Calu3 (cell line): ENCODE measurements at regions of chr6 and their contacts with region 1.

Region 1: DNA sequence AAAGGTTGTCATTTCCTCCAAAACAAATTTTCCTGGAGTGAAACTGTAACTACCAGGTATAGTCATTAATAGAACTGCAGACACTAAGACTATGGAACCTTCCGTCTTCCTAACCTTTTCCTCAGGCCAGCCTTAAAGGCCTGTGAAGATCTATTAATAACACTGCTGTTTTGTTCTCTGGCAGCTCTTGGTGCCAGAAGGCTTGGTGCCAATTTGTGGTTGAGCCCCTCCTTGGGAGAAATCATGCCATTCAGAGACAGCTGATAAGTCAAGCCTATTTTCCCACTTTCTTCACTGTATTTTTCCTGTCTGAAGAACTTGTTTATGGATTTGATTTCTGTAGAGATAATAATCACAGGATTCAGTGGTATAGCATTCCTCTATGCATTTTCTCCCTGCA is 64.8 kb downstream of the HCRTR2 start:
- DNase-seq: peak; percentile 50
- H3K4me3 Mint-ChIP-seq: no peak overlapping the region
- H3K27ac Mint-ChIP-seq: no peak overlapping the region
- H3K4me1 Mint-ChIP-seq: peaks cover 23% of the 10 kb centered on the region
- H3K27me3 Mint-ChIP-seq: no peaks in the 10 kb centered on the region
- CTCF ChIP-seq: no peak

Region 2: DNA sequence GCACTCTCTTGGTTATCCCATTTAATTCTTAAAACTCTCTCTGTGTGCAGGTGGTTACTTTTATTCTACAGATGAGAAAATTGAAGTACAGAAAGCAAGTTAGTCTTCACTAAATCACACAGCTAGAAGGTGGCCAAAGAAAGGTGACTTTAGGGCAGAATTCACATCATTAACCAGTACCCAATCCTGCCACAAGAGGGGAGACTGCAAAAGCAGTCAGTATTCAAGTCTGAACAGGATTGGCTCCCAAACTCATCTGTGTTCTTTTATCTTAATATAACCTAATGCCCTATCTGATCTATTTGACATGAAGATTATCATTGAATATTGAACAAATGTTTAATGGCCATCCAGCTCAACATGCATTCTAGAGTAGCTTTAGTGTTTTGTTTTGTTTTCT is 617.8 kb before region 1 on chr6:
- CTCF ChIA-PET with region 1: no interaction called
- intact Hi-C with region 1: loop called (anchors 5 kb)
- DNase-seq: peak; percentile 31
- H3K4me3 Mint-ChIP-seq: no peak overlapping the region
- H3K27ac Mint-ChIP-seq: no peak overlapping the region
- H3K4me1 Mint-ChIP-seq: peaks cover 14% of the 10 kb centered on the region
- H3K27me3 Mint-ChIP-seq: no peaks in the 10 kb centered on the region
- CTCF ChIP-seq: peak; percentile 47